Calu3 (cell line): ENCODE measurements at regions of chr15 and their contacts with region 1.

Region 1: GRCh38 chr15:77974098-77974414 is 103.5 kb downstream of the TBC1D2B start:
- DNase-seq: peak; percentile 36
- H3K4me3 Mint-ChIP-seq: no peak overlapping the region
- H3K27ac Mint-ChIP-seq: no peak overlapping the region
- H3K4me1 Mint-ChIP-seq: no peaks in the 10 kb centered on the region
- H3K27me3 Mint-ChIP-seq: no peaks in the 10 kb centered on the region
- CTCF ChIP-seq: no peak

Region 2: GRCh38 chr15:78778422-78778821 is 804.4 kb after region 1 on chr15:
- CTCF ChIA-PET with region 1: no interaction called
- intact Hi-C with region 1: loop called (anchors 10 kb)
- DNase-seq: no peak
- H3K4me3 Mint-ChIP-seq: no peak overlapping the region
- H3K27ac Mint-ChIP-seq: no peak overlapping the region
- H3K4me1 Mint-ChIP-seq: no peaks in the 10 kb centered on the region
- H3K27me3 Mint-ChIP-seq: peaks cover 61% of the 10 kb centered on the region
- CTCF ChIP-seq: no peak